Naive thymus-derived CD4-positive, alpha-beta T cell (primary cell): ENCODE measurements at regions of chr22 and their contacts with region 1.

Region 1: GRCh38 chr22:46250035-46250782 is at the start of gene CDPF1:
- DNase-seq: peak; percentile 82 to 96 (median 86)
- ATAC-seq: peak; percentile 97
- H3K4me3 ChIP-seq: peak within 1 kb of the TSS; percentile 71
- H3K4me3 Mint-ChIP-seq: peak within 1 kb of the TSS; percentile 74 to 93 (median 83)
- H3K27ac ChIP-seq: peak within 1 kb of the TSS; percentile 77
- H3K27ac Mint-ChIP-seq: peak within 1 kb of the TSS; percentile 51 to 92 (median 77)
- H3K4me1 ChIP-seq: peaks cover 5 to 7% of the 10 kb centered on the region in 2 donors
- H3K4me1 Mint-ChIP-seq: peaks cover 17 to 32% (median 29%) of the 10 kb centered on the region in 7 donors
- H3K27me3 ChIP-seq: no peaks in the 10 kb centered on the region
- H3K27me3 Mint-ChIP-seq: no peaks in the 10 kb centered on the region
- total RNA-seq, gene CDPF1: 4.2 to 13.8 (median 11.7) TPM

Region 2: DNA sequence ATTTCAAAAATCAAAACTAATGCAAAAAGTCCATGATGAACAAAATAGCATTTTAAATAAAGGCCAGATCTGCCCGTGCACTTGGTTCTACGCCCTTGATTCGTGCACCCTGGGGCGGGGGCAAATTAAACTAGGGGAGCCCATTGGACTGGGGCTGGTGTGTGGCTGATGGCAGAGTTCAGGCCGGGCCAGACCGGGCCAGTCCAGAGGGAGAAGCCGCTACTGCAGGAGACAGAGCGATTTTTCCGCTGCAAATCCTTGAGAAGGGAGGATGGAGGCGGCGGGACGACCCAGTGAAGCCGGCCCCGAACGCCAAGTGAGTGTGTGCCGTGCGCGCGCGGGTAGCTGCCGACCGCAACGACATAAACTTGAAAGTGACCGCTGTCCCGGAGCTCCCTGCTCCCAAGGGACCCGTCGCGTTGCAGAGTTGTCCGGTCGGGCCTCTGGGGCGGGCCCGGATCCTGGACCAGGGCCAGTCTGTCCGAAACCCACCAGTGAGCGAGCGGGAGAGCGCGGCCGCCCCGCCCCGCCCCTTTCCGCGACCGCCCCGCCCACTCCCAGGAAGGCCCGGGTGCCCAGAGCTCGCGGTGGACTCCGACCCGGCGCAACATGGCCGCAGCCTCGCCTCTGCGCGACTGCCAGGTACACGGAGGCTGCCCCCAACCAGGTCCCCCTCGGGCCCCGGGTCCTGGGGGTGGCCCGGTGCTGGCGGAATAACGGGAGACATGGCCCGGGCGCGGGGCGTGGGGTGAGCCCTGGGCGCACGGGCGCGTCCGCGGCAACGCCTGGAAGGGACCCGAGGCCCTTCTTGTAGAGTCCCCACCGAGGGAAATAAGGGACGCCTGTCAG is 17.4 kb after region 1 on chr22 and contains the start of gene TTC38:
- CTCF ChIA-PET with region 1: interaction called, 3 read pairs
- POLR2A ChIA-PET with region 1: interaction called, 9 read pairs
- intact Hi-C with region 1: loop called (anchors 1 to 2 kb)
- DNase-seq: peak in 8 of 9 donors; percentile 21 to 72 (median 28)
- ATAC-seq: peak; percentile 90
- H3K4me3 ChIP-seq: peak within 1 kb of the TSS; percentile 63
- H3K4me3 Mint-ChIP-seq: peak within 1 kb of the TSS; percentile 82 to 93 (median 89)
- H3K27ac ChIP-seq: peak within 1 kb of the TSS; percentile 48
- H3K27ac Mint-ChIP-seq: peak within 1 kb of the TSS in 6 of 9 donors; percentile 12 to 77 (median 68)
- H3K4me1 ChIP-seq: peaks cover 0 to 4% of the 10 kb centered on the region in 2 donors
- H3K4me1 Mint-ChIP-seq: peaks cover 6 to 27% (median 17%) of the 10 kb centered on the region in 7 donors
- H3K27me3 ChIP-seq: peaks cover 0 to 3% of the 10 kb centered on the region in 2 donors
- H3K27me3 Mint-ChIP-seq: peaks cover 16 to 35% (median 26%) of the 10 kb centered on the region in 5 donors
- total RNA-seq, gene TTC38: 4.1 to 26.0 (median 7.2) TPM

Region 3: DNA sequence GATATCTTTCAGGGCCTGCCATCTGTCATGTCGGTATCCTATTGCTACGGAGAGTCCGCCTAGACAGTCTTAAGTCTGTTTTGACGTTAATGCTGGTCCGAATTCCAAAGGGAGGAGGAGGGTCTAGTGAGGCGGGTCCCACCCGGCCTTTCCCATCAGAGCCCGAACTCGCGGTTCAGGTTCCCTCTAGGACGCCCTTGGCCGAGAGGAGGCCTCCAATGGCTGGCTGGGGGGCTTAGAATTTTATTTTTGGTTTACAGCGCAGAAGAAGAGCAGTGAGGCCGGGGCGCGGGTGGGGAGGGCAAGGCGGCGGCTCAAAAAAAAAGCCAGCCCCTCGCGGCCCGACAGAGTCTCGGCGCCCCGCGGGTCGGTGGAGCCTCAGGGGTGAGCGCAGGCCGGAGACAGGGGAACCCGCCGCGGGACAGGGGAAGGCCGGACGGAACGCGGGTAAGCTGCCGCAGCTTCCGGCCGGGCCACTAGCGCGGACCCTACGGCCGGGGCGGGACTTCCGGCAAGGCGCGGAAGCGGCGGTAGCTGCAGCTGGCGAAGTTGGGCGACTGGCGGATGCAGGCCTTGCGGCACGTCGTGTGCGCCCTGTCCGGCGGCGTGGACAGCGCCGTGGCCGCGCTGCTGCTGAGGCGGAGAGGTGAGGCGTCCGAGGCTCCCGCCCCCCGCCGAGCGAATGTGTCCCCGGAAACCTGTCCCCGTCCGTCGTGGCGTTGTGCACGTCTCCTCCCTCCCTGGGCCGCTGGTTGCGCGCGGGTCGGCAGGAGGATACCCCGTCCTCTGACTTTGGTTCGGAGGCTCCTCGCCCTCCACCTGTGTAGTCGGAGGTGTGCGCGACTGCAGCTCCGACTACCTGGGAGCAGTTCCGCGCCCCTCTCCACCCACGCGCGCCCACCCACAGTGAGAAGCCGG is 85.3 kb after region 1 on chr22 and contains the start of gene TRMU:
- CTCF ChIA-PET with region 1: no interaction called
- POLR2A ChIA-PET with region 1: interaction called, 3 read pairs
- intact Hi-C with region 1: loop called in 1 of 2 experiments (anchors 10 kb)
- DNase-seq: peak; percentile 32 to 83 (median 60)
- ATAC-seq: peak; percentile 94
- H3K4me3 ChIP-seq: peak within 1 kb of the TSS; percentile 87
- H3K4me3 Mint-ChIP-seq: peak within 1 kb of the TSS; percentile 92 to 100 (median 95)
- H3K27ac ChIP-seq: peak within 1 kb of the TSS; percentile 82
- H3K27ac Mint-ChIP-seq: peak within 1 kb of the TSS; percentile 77 to 97 (median 94)
- H3K4me1 ChIP-seq: peaks cover 7 to 9% of the 10 kb centered on the region in 2 donors
- H3K4me1 Mint-ChIP-seq: peaks cover 23 to 50% (median 38%) of the 10 kb centered on the region in 7 donors
- H3K27me3 ChIP-seq: no peaks in the 10 kb centered on the region
- H3K27me3 Mint-ChIP-seq: no peaks in the 10 kb centered on the region
- total RNA-seq, gene TRMU: 56.9 to 92.1 (median 70.3) TPM